Esophagus muscularis mucosa (tissue), 4 donors: ENCODE measurements at regions of chr2 and their contacts with region 1.

Region 1: DNA sequence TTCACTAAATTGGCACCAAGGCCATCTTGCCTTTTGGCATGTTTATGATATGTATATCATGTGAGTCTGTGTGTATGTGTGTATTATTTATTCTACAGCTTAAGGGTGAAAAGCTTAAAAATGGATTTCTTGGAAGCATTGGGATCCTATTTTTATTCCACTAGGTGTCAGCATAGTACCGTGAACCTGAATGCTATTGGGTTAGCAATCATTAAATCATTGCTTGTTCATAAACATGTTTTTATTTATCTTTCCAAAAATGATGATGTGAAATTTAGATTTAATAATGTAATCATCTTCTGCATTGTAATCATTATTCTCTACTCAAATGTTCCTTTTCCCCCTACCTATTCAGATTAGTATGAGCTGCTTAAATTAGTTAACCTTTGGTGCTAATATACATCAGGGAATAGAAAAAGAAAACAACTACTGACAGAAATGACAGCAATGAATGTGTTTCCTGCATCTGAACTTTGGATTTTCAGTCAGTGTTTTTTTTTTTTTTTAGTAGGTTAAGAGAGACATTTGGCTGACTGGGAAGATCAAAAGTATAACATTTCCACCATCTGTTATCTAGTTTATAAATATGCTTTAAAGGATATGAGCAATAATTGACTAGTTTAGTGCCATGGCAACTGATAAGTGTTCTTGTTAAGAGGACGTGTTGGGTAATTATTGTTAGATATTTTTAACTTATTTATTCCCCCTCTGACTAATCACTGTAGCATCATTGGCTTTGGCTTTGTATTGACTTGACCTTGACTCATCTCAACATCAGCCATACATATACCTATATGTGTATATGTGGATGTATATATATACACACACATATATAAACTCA is 14.1 kb upstream of the ZSWIM2 start:
- DNase-seq: no peak
- H3K4me3 ChIP-seq: no peak overlapping the region
- H3K27ac ChIP-seq: no peak overlapping the region
- H3K4me1 ChIP-seq: no peaks in the 10 kb centered on the region
- H3K27me3 ChIP-seq: no peaks in the 10 kb centered on the region
- CTCF ChIP-seq: peak; percentile 51 to 69 (median 68)
- EP300 ChIP-seq: no peak
- POLR2A ChIP-seq: no peak

Region 2: GRCh38 chr2:185854915-185855314 is 1008.2 kb before region 1 on chr2:
- intact Hi-C with region 1: no loop called
- DNase-seq: no peak
- H3K4me3 ChIP-seq: no peak overlapping the region
- H3K27ac ChIP-seq: no peak overlapping the region
- H3K4me1 ChIP-seq: no peaks in the 10 kb centered on the region
- H3K27me3 ChIP-seq: no peaks in the 10 kb centered on the region
- CTCF ChIP-seq: no peak
- EP300 ChIP-seq: no peak
- POLR2A ChIP-seq: no peak

Region 3: GRCh38 chr2:187453078-187453641 is 590.1 kb after region 1 on chr2:
- intact Hi-C with region 1: loop called (anchors 5 kb)
- DNase-seq: no peak
- H3K4me3 ChIP-seq: no peak overlapping the region
- H3K27ac ChIP-seq: no peak overlapping the region
- H3K4me1 ChIP-seq: no peaks in the 10 kb centered on the region
- H3K27me3 ChIP-seq: no peaks in the 10 kb centered on the region
- CTCF ChIP-seq: peak in 2 of 3 experiments; percentile 26 to 29
- EP300 ChIP-seq: no peak
- POLR2A ChIP-seq: no peak

Region 4: GRCh38 chr2:187574969-187575750 is 712.1 kb after region 1 on chr2:
- intact Hi-C with region 1: loop called (anchors 5 kb)
- DNase-seq: no peak
- H3K4me3 ChIP-seq: no peak overlapping the region
- H3K27ac ChIP-seq: peak overlapping the region in 1 of 4 donors; percentile 6
- H3K4me1 ChIP-seq: peaks cover 0 to 13% (median 9%) of the 10 kb centered on the region in 4 donors
- H3K27me3 ChIP-seq: no peaks in the 10 kb centered on the region
- CTCF ChIP-seq: no peak
- EP300 ChIP-seq: no peak
- POLR2A ChIP-seq: no peak